Activated CD4-positive, alpha-beta memory T cell treated with anti-CD3 and anti-CD28 coated beads for 36 hours (primary cell): ENCODE measurements at regions of chr11 and their contacts with region 1.

Region 1: DNA sequence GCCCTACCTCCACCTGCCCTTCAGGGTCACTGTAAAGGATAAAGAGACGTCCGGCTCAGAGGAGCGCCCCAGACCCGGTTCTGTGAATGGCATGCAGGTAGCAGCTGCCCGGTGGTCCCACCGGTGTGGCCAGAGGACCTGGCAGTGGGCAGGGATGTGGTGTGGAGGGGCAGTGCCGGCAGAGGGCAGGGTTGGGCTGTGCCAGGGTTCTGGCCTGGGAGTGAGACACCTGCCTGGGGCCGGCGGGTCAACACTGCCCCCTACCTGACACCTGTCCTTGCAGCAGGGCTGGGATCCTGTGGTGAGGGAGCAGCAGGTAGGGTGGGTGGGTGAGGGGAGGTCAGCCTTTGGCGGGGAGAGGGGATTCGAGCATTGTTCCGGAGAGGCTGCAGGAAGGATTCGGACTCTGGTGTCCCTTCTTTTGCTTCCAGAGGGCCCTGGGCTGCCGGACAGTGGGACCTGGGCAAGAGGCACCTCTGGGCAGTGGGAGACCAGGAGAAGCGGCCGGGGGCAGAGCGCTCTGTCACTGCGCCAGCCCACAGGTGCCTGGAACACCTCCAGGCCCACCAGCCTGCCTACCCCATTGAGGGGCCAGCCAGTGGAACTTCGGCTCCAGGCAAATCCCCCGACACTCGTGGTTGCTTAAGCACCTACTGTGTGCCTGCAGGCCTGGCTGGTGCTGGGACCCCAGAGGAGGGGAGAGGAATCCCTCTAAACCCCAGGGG is 1.6 kb upstream of the PHLDA2 start:
- DNase-seq: peak; percentile 80
- H3K4me3 Mint-ChIP-seq: peak overlapping the region; percentile 64
- H3K27ac Mint-ChIP-seq: peak overlapping the region; percentile 25
- H3K4me1 Mint-ChIP-seq: peaks cover 33% of the 10 kb centered on the region
- H3K27me3 Mint-ChIP-seq: peaks cover 11% of the 10 kb centered on the region

Region 2: DNA sequence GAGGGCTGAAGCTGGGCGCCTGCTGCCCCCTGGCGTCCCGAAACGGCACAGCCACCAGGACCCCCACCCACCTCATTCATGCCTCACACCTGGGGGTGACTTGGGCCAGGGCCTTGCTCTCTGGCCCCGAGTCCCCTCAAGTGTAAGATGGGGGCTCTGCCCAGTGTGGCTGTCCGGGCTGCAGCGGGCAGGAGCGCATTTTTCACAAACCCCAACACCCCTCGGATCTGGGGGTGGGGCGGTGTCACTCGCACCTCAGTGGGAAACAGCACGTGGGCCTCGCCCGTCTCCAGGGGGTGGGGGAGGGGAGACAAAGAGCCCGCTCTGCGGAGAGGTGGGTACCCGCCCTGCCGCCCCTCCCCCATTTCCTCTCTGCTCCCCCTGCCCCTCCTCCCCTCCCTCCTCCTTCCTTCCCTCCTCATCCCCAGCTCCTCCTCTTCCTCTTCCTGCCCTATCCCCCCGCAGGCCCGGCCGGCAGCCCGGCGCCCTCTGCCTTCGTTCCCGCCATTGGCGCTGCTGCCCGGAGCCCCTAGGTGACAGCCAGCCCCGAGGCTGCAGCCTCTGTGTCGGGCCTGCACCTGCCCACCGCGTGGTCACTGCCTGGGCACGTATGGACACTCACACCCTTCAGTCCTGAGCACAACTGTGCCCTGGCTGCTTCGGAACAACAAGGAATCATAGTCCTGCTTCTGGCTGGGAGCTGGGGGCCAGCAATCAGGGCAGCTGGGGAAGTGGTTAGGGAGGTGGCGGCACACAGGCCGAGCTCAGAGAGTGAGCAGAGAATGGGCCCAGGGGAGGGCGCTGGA is 38.4 kb before region 1 on chr11:
- CTCF ChIA-PET with region 1: interaction called, 49 read pairs
- POLR2A ChIA-PET with region 1: interaction called, 8 read pairs
- intact Hi-C with region 1: loop called (anchors 2 kb)
- DNase-seq: peak; percentile 80
- H3K4me3 Mint-ChIP-seq: peak overlapping the region; percentile 80
- H3K27ac Mint-ChIP-seq: peak overlapping the region; percentile 84
- H3K4me1 Mint-ChIP-seq: peaks cover 10% of the 10 kb centered on the region
- H3K27me3 Mint-ChIP-seq: no peaks in the 10 kb centered on the region

Region 3: GRCh38 chr11:2901854-2902783 is 28.7 kb before region 1 on chr11:
- CTCF ChIA-PET with region 1: interaction called, 8 read pairs
- POLR2A ChIA-PET with region 1: interaction called, 9 read pairs
- intact Hi-C with region 1: loop called (anchors 1 kb)
- DNase-seq: peak; percentile 98
- H3K4me3 Mint-ChIP-seq: peak overlapping the region; percentile 71
- H3K27ac Mint-ChIP-seq: peak overlapping the region; percentile 62
- H3K4me1 Mint-ChIP-seq: peaks cover 32% of the 10 kb centered on the region
- H3K27me3 Mint-ChIP-seq: no peaks in the 10 kb centered on the region

Region 4: DNA sequence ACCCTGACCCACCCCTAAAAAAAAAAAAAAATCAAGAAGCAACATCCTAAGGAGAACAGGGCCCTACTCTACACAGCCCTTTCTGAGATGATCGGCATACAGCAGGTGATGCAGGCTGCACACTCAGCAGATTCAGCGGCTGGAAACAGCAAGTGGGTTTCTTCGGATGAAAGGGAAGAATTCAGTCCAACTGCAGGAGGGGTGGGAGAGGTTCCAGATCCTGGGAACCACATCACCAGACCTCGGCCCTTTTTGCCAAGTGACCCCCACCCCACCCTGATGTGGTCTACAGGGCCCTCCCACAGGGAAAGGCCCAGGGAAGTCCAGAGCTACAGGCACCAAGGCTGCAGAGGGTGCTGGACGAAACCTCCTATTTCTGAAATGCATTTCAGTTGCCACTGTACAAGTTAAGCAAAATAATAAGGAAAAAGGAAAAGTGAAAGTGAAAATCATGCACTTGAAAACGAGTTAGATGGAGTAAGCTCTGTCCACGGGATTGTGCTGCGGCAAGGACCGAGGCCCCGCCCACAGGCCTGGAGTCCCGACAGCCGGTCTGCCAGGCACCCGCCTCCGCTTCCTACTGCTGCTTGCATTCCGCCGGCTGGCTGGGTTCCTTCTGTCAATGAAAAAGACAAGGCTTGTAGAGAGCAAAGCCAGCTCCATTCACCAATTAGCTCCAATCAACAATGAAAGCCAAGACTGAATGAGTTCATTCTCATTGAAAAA is 14.3 kb after region 1 on chr11:
- CTCF ChIA-PET with region 1: interaction called, 23 read pairs
- POLR2A ChIA-PET with region 1: interaction called, 11 read pairs
- intact Hi-C with region 1: no loop called
- DNase-seq: peak; percentile 75
- H3K4me3 Mint-ChIP-seq: no peak overlapping the region
- H3K27ac Mint-ChIP-seq: peak overlapping the region; percentile 26
- H3K4me1 Mint-ChIP-seq: peaks cover 46% of the 10 kb centered on the region
- H3K27me3 Mint-ChIP-seq: no peaks in the 10 kb centered on the region